Right ventricle myocardium inferior (tissue), 1 donor: ENCODE measurements at regions of chr6 and their contacts with region 1.

Region 1: DNA sequence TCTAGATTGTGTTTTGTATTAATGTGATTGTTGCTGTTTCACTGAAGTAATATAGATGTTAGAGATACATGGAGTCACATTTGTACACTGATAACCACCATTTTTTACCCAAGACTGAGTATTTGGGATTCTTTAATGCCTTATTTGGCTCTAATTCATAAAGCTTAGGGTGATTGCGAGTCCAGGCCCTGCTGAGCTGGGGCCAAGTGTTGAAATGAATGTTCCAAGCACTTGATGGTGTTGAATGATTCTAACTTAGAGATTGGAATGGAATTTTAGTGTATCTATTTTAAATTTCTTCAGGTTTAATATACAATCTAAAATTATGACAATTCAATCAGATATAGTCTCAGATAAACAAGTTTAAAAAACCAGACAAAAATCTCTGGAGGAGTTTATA is 329.4 kb upstream of the SLC35B3 start:
- DNase-seq: no peak
- ATAC-seq: no peak

Region 2: DNA sequence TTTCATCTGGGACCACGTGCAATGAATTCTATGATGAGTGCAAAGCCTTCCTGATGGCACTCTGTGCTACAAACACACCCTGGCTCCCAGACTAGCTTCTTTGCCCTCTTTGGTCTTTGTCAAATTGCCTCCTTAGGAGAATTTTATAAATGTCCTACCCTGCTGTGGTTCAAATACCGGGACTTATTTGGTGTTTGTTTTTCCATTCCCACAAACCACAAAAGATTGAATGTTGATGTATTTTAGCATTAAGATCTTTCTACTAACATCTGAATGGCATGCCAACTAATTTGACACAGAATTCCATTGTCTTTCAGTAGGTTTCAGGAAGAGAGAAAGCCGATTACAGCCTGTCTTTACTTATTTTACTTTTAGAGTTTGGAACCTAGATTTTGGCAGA is 94.8 kb after region 1 on chr6:
- intact Hi-C with region 1: loop called (anchors 5 kb)
- DNase-seq: no peak
- ATAC-seq: no peak